ENCODE measurements at regions of chr1 and their contacts with region 1.

Region 1: GRCh38 chr1:184805667-184806295 is 51.1 kb upstream of the EDEM3 start:
- DNase-seq: no peak
- H3K4me3 ChIP-seq: no peak overlapping the region
- H3K27me3 ChIP-seq: no peaks in the 10 kb centered on the region
- CTCF ChIP-seq: peak; percentile 90

Region 2: DNA sequence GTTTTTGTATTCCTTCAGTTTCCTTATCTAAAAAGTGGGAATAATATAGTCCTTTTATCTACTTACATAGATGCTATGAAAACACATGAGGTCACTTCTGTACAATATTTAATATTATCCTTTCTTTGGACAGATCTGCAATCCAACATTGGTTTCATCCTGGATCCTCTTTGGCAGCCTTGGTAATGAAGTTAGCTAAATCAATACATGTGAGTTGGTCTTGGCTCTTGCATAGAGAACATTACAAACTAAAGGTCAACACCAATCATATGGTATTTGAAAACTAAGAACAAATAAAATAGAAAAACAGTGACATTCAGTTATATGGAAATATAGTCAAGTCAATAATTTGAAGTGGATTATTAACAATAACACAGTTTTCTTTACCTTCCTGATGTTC is 47.9 kb before region 1 on chr1:
- CTCF ChIA-PET with region 1: no interaction called
- POLR2A ChIA-PET with region 1: no interaction called
- DNase-seq: no peak
- H3K4me3 ChIP-seq: no peak overlapping the region
- H3K27me3 ChIP-seq: peaks cover 3% of the 10 kb centered on the region; the same call in 1 of the 2 replicates
- CTCF ChIP-seq: no peak

Region 3: DNA sequence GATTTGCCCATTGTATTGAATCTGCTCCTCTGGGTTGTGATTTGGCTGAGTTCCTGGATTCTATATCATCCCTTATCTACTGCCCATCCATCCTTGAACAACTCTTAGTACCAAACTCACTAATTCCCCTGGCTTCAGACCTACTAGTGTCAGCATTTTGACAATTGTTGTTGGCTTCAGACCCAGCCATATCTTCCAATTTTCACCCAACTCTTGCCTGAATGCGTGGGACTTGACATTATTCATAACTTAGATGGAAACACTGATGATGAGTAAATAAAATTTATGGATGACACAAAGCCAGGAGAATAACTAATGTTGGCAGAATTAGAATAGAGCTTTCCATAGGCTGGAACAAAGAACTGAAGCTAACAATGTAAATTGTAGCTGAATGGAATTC is 23.8 kb before region 1 on chr1:
- CTCF ChIA-PET with region 1: no interaction called
- POLR2A ChIA-PET with region 1: no interaction called
- DNase-seq: no peak
- H3K4me3 ChIP-seq: no peak overlapping the region
- H3K27me3 ChIP-seq: no peaks in the 10 kb centered on the region
- CTCF ChIP-seq: no peak

Region 4: GRCh38 chr1:184792450-184792969 is 13.3 kb before region 1 on chr1:
- CTCF ChIA-PET with region 1: interaction called, 13 read pairs
- POLR2A ChIA-PET with region 1: no interaction called
- DNase-seq: peak; percentile 95
- H3K4me3 ChIP-seq: no peak overlapping the region
- H3K27me3 ChIP-seq: no peaks in the 10 kb centered on the region
- CTCF ChIP-seq: no peak

Region 5: GRCh38 chr1:184910691-184911091 is 104.9 kb after region 1 on chr1:
- CTCF ChIA-PET with region 1: no interaction called
- POLR2A ChIA-PET with region 1: no interaction called
- DNase-seq: no peak
- H3K4me3 ChIP-seq: no peak overlapping the region
- H3K27me3 ChIP-seq: no peaks in the 10 kb centered on the region
- CTCF ChIP-seq: no peak

Region 6: DNA sequence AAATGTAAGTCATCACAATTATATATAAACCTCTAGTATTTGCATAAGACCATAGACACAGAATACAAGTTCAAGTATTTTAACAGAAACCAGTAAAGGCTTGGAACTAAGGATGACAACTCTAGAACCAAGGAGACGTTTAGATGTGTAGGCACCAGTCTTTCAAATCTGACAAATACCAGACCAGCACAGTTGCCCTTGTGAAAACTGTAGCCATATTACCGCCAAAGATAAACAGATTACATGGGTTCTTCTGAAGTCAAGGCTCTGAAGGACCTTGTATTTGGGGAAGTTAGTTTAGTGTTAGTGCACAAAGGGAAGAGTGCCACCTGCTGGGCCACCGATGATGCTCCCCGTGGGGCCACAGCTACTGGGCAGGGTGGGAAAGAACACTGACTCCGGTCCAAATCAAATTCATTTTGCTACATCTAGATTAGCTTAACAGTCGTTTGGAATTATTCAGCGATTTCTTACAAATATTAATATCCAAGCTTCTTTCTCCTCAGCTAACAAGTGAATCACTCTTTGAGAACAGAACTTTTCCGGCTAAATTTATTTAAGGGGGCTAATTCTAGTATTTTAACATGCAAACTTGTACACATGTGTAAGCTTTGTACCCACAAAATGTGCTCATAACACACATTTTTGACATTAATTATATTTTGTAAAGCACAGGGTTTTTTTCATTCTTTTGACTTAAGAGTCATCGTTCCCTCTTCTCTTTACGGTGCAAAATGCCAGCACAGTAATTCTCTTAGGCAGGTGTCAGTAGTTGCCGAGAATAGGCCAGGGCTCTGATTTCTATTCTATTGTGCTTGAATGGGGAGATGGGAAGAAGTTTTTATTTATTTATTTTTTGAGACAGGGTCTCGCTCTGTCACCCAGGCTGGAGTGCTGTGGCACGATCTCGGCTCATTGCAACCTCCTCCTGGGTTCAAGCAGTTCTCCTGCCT is 176.5 kb after region 1 on chr1:
- CTCF ChIA-PET with region 1: interaction called, 300 read pairs
- POLR2A ChIA-PET with region 1: no interaction called
- DNase-seq: no peak
- H3K4me3 ChIP-seq: no peak overlapping the region
- H3K27me3 ChIP-seq: no peaks in the 10 kb centered on the region
- CTCF ChIP-seq: peak; percentile 92